HEK293T (cell line): ENCODE measurements at regions of chr6 and their contacts with region 1.

Region 1: DNA sequence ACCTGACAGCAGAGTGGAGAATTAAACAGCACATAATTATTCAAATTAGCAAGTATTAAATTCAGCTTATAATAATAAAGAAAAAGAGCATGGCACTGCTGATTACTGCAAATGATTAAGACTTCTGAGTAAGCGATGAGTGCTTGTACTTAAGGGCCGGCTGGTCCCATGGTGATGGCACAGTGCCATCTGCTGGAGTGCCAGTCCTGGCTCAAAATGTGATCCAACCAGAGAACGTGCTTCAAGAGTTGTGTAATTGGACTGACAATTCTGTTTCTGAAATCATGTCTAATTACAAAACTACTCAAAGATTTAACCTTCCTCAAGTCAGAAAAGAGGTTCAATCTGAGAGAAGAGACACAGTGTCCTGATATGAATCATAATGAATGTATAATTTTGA is 181.6 kb upstream of the RGS17 start:
- DNase-seq: peak; percentile 43

Region 2: DNA sequence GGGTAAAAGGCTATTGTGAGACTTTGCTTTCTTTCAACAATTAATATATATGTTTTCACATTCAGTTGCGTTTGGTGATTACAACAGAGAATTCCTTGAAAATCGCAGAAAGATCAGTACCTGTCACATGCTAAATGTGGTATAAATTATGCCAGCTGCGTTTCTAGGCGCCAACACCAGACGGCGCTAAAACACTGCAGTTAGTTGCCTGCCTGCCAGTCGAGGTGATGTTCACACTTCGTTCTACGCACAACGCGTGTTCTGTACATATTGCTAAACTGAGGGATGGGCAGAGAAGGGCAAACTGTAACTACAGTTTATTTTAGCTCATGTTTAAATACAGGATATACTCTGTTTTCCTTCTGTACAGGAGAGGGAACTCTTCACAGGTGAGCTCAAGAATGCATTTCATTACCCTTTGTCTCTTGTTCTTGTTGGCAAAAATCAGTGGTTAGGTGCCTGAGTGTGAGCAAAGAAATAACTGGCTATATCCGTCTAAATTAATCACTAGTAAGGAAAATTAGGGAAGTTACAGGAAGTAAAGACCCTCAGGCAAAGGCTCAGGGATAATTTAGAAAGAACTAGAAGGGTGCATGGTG is 81.5 kb before region 1 on chr6:
- CTCF ChIA-PET with region 1: interaction called, 13 read pairs
- POLR2A ChIA-PET with region 1: no interaction called
- DNase-seq: peak; percentile 75